Mammary epithelial cell (primary cell): ENCODE measurements at regions of chr13 and their contacts with region 1.

Region 1: DNA sequence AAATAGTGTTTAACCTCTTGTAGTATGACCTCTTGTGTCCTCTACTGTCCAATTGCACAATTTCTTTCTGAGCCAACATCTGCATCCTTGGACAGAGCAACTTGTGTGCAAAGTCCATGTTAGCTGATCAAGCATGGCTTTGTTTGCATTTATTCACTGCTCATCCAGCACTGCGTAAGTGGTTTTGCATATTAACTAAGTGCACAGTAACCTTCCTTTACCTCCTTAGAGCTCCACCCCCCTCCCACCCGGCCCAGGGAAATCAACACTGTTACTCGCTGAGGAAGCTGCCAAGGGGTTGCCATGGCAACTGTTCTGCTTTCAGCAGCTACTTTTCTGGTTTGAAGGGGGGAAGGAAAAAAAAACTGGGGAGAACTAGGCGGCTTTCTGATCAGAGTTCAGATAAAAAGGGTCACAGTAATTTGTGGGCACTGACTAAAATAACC is 153.5 kb upstream of the KLF12 start:
- DNase-seq: peak; percentile 30
- H3K4me3 ChIP-seq: no peak overlapping the region
- H3K27ac ChIP-seq: no peak overlapping the region
- H3K4me1 ChIP-seq: peaks cover 26% of the 10 kb centered on the region
- H3K27me3 ChIP-seq: no peaks in the 10 kb centered on the region
- CTCF ChIP-seq: no peak

Region 2: GRCh38 chr13:73722120-73722519 is 565.6 kb before region 1 on chr13:
- CTCF ChIA-PET with region 1: no interaction called
- dilution Hi-C with region 1: no loop called
- in situ Hi-C with region 1: no loop called
- intact Hi-C with region 1: loop called (anchors 1 kb)
- DNase-seq: peak; percentile 94
- H3K4me3 ChIP-seq: no peak overlapping the region
- H3K27ac ChIP-seq: peak overlapping the region; percentile 80
- H3K4me1 ChIP-seq: peaks cover 33% of the 10 kb centered on the region
- H3K27me3 ChIP-seq: no peaks in the 10 kb centered on the region
- CTCF ChIP-seq: peak; percentile 43 to 56

Region 3: GRCh38 chr13:73835138-73835721 is 452.5 kb before region 1 on chr13:
- CTCF ChIA-PET with region 1: interaction called, 12 read pairs
- dilution Hi-C with region 1: no loop called
- in situ Hi-C with region 1: loop called (anchors 25 kb)
- intact Hi-C with region 1: loop called (anchors 1 kb)
- DNase-seq: peak; percentile 36
- H3K4me3 ChIP-seq: no peak overlapping the region
- H3K27ac ChIP-seq: no peak overlapping the region
- H3K4me1 ChIP-seq: no peaks in the 10 kb centered on the region
- H3K27me3 ChIP-seq: no peaks in the 10 kb centered on the region
- CTCF ChIP-seq: peak; percentile 54 to 61

Region 4: DNA sequence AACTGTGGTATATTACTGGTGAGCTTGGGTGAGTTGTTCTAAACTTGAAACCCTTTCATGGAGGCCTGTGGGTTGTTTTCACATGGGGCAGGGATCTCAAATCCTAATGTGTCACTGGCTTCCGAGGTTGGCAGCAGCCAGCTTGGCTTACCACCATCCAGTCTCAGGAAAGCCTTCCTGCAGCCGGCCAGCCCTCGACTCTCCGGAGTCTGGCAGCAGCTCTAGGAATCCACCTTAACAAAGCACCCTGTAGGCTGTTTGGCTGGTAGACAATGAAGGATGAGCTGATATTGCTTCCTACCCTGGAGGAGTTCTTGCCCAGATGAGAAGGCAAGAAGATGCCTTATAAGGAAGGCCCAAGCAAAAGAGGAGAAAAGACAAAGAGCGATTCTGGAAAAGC is 341.9 kb before region 1 on chr13:
- CTCF ChIA-PET with region 1: interaction called, 10 read pairs
- dilution Hi-C with region 1: no loop called
- in situ Hi-C with region 1: loop called (anchors 10 to 25 kb)
- intact Hi-C with region 1: loop called (anchors 1 kb)
- DNase-seq: peak; percentile 12
- H3K4me3 ChIP-seq: no peak overlapping the region
- H3K27ac ChIP-seq: no peak overlapping the region
- H3K4me1 ChIP-seq: no peaks in the 10 kb centered on the region
- H3K27me3 ChIP-seq: no peaks in the 10 kb centered on the region
- CTCF ChIP-seq: no peak

Region 5: DNA sequence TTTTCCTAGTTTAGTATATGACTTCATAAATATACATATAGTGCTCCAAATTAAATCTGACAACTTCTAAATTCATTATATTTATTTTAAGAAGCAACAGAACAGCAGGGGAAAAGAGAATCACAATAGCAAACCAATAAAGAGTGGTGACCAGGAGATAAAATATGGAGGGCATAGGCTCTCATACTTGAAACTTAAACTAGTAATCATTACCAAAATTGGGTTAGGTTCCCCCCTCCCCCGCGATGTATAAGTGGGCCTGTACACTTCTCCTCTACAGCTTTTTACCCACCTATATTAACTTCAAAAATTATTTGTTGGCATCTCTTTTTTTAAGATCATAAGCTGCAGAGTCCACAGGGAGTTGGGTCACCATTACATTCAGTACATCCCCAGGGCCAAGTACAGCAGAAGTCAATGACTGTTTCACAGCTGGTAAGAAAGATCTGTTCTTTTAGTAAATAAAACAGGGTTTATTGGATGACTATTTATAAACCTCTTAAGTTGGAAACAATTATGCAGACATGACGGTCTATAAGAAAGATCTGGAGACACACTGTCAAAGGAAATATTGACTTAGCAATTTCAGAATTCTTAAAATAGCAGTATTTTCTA is 183.0 kb before region 1 on chr13:
- CTCF ChIA-PET with region 1: no interaction called
- dilution Hi-C with region 1: no loop called
- in situ Hi-C with region 1: no loop called
- intact Hi-C with region 1: no loop called
- DNase-seq: no peak
- H3K4me3 ChIP-seq: no peak overlapping the region
- H3K27ac ChIP-seq: no peak overlapping the region
- H3K4me1 ChIP-seq: no peaks in the 10 kb centered on the region
- H3K27me3 ChIP-seq: no peaks in the 10 kb centered on the region
- CTCF ChIP-seq: no peak

Region 6: GRCh38 chr13:75219479-75220237 is 931.9 kb after region 1 on chr13:
- CTCF ChIA-PET with region 1: no interaction called
- dilution Hi-C with region 1: no loop called
- in situ Hi-C with region 1: loop called in 1 of 2 experiments (anchors 25 kb)
- intact Hi-C with region 1: loop called (anchors 1 kb)
- DNase-seq: peak; percentile 59
- H3K4me3 ChIP-seq: peak overlapping the region; percentile 26 to 41 (median 30)
- H3K27ac ChIP-seq: no peak overlapping the region
- H3K4me1 ChIP-seq: peaks cover 14% of the 10 kb centered on the region
- H3K27me3 ChIP-seq: no peaks in the 10 kb centered on the region
- CTCF ChIP-seq: peak; percentile 89 to 96